ENCODE measurements at regions of chr2 and their contacts with region 1.

Region 1: DNA sequence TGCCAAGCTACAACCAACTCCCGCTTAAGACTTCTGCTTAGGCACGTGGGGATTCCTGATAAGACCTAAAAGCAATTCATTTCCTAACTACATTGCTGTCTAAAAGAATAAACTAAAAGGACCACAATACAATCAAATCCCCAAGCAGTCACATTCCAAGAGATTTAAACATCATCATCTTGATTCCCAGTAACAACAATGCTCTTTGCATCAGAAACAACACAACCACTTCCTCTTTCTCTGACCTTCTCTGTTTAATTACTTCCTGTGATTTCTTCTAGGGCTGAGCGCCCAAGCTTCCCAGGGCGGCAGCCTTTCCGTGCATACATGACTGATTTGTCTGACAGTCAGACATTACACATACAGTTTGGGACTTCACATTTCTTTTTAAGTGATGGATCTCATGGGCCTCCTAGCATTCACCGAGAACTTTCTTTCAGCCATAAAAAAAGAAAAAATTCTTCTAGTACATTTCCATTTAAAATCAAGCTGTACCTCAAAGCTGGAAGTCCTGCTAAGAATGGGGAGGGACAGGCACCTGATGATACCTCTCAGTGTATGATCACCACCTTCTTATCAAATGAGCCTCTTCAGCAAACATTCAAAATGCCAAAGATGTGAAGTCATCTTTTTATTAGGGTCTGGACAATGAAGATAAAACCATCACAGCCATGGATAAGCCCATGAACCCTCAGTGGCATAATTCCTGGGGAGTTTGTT is 11.5 kb downstream of the SPRED2 start:
- DNase-seq: peak in 2 of 4 experiments; percentile 51 to 58
- ATAC-seq: peak; percentile 83
- H3K4me3 ChIP-seq: no peak overlapping the region
- H3K27ac ChIP-seq: peak overlapping the region; percentile 16; the same call in 1 of the 3 replicates
- H3K4me1 ChIP-seq: peaks cover 0 to 23% of the 10 kb centered on the region in 2 experiments; a peak in 4 of 5 replicates
- H3K27me3 ChIP-seq: no peaks in the 10 kb centered on the region
- CTCF ChIP-seq: no peak
- EP300 ChIP-seq: no peak
- POLR2A ChIP-seq: no peak
- RAD21 ChIP-seq: no peak

Region 2: GRCh38 chr2:65407240-65407639 is 13.6 kb before region 1 on chr2:
- CTCF ChIA-PET with region 1: no interaction called
- POLR2A ChIA-PET with region 1: interaction called, 29 read pairs
- in situ Hi-C with region 1: no loop called
- intact Hi-C with region 1: no loop called
- DNase-seq: no peak
- ATAC-seq: no peak
- H3K4me3 ChIP-seq: no peak overlapping the region
- H3K27ac ChIP-seq: no peak overlapping the region; the same call in 1 of the 3 replicates
- H3K4me1 ChIP-seq: peaks cover 14 to 40% of the 10 kb centered on the region in 2 experiments
- H3K27me3 ChIP-seq: no peaks in the 10 kb centered on the region
- CTCF ChIP-seq: no peak
- EP300 ChIP-seq: no peak
- POLR2A ChIP-seq: no peak
- RAD21 ChIP-seq: no peak

Measured in K562 (cell line).